ENCODE measurements at regions of chr1 and their contacts with region 1.

Region 1: GRCh38 chr1:40951943-40952743 is 27.4 kb upstream of the CTPS1 start:
- DNase-seq: no peak
- H3K4me3 ChIP-seq: no peak overlapping the region
- H3K27ac ChIP-seq: no peak overlapping the region
- H3K4me1 ChIP-seq: peaks cover 0 to 21% (median 3%) of the 10 kb centered on the region in 3 donors
- H3K27me3 ChIP-seq: peaks cover 0 to 17% (median 0%) of the 10 kb centered on the region in 4 donors
- CTCF ChIP-seq: peak; percentile 56 to 96 (median 91)
- POLR2A ChIP-seq: no peak

Region 2: GRCh38 chr1:40783001-40783905 is 168.9 kb before region 1 on chr1 and contains the start of gene KCNQ4:
- intact Hi-C with region 1: loop called (anchors 5 kb)
- DNase-seq: no peak
- H3K4me3 ChIP-seq: peak within 1 kb of the TSS; percentile 25 to 72 (median 54)
- H3K27ac ChIP-seq: peak within 1 kb of the TSS; percentile 42 to 87 (median 80)
- H3K4me1 ChIP-seq: peaks cover 13 to 57% (median 22%) of the 10 kb centered on the region in 3 donors
- H3K27me3 ChIP-seq: peaks cover 0 to 13% (median 0%) of the 10 kb centered on the region in 4 donors
- CTCF ChIP-seq: no peak
- POLR2A ChIP-seq: no peak
- total RNA-seq, gene KCNQ4: 0.50 to 2.1 (median 0.81) TPM

Region 3: DNA sequence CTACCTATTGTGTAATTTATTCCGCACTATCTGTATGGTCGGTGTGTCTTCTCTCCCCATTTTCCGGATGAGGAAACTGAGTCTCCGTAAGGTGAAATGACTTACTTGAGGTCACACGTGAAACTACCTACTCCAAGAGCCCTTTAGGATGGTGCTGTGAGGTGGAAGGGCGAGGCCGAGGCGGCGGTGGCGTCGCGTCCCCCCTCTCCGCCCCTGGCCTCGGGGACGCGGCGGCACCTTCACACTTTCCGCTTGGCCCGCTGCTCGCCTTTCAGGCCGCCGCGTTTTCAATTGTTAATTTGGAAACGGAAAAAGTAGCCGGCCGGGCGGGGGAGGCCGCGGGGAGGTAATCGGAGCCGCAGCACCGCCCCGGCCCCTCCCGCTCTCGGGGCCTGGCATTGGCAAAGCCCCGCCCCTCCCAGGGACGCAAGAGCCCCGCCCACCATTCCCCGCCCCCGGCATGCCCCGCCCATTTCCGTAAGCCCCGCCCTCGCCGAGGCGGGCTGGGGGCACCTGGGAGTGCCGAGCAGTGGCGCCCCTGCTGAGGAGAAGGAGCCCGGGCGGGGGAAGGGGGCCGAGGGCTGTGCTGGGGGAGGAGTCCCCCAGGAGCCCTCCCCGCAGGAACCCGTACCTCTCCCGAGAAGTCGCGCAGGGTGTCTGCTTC is 149.9 kb before region 1 on chr1:
- intact Hi-C with region 1: no loop called
- DNase-seq: peak; percentile 32
- H3K4me3 ChIP-seq: peak overlapping the region; percentile 24 to 67 (median 37)
- H3K27ac ChIP-seq: peak overlapping the region; percentile 71 to 88 (median 86)
- H3K4me1 ChIP-seq: peaks cover 18 to 74% (median 31%) of the 10 kb centered on the region in 3 donors
- H3K27me3 ChIP-seq: no peaks in the 10 kb centered on the region
- CTCF ChIP-seq: no peak
- POLR2A ChIP-seq: no peak

Region 4: DNA sequence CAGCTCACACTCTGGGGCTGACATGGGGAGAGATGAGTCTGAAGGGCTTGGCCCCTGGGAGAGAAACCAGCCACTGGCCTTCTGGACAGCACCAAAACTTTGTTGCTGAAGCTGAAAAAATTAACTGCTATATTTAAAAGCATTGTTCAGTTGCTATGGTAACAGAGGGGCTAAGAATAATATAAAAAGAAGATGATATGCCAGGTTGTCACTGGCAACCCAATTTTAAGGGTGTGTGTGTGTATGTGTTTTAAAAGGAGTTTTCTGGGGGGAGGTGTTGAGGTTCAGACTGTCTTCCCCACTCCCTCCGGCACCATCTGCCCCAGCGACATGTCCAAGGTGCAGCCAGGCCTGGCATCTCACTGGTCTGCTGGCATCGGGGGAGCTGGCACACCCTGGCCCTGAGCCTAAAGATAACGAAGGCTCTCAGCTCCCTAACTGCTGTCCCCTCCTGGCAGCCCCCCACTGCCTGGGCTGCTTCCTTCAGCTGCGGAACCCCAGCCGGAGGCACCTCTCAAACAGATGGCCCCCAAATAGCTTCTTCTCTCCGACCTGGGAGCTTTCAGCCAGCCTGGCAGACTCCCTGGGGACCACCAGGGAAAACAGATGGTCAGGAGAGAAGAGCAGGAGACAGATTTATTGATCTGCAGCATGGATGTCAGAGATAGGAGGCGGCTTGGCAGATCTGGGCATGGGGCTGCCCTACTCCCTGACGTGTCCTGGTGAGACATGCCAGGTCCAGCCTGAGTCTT is 762.7 kb after region 1 on chr1:
- intact Hi-C with region 1: no loop called
- DNase-seq: no peak
- H3K4me3 ChIP-seq: no peak overlapping the region
- H3K27ac ChIP-seq: no peak overlapping the region
- H3K4me1 ChIP-seq: peaks cover 0 to 14% (median 0%) of the 10 kb centered on the region in 3 donors
- H3K27me3 ChIP-seq: no peaks in the 10 kb centered on the region
- CTCF ChIP-seq: no peak
- POLR2A ChIP-seq: no peak